Activated B cell treated with CpG ODN at 0.5 μM for 24 hours (primary cell): ENCODE measurements at regions of chr6 and their contacts with region 1.

Region 1: GRCh38 chr6:30672445-30673253 is at the start of gene DHX16:
- DNase-seq: peak; percentile 80
- ATAC-seq: peak; percentile 88
- H3K4me3 Mint-ChIP-seq: peak within 1 kb of the TSS; percentile 91
- H3K27ac Mint-ChIP-seq: peak within 1 kb of the TSS; percentile 84
- H3K4me1 Mint-ChIP-seq: peaks cover 42% of the 10 kb centered on the region
- H3K27me3 Mint-ChIP-seq: no peaks in the 10 kb centered on the region
- CTCF ChIP-seq: peak; percentile 51
- total RNA-seq, gene DHX16: 42.3 and 50.4 TPM in 2 replicates

Region 2: GRCh38 chr6:30556066-30556905 is 116.4 kb before region 1 on chr6 and contains the start of gene GNL1:
- CTCF ChIA-PET with region 1: no interaction called
- POLR2A ChIA-PET with region 1: interaction called, 3 read pairs
- intact Hi-C with region 1: loop called (anchors 1 kb)
- DNase-seq: peak; percentile 99
- ATAC-seq: peak; percentile 89
- H3K4me3 Mint-ChIP-seq: peak within 1 kb of the TSS; percentile 94
- H3K27ac Mint-ChIP-seq: peak within 1 kb of the TSS; percentile 97
- H3K4me1 Mint-ChIP-seq: peaks cover 40% of the 10 kb centered on the region
- H3K27me3 Mint-ChIP-seq: no peaks in the 10 kb centered on the region
- CTCF ChIP-seq: no peak
- total RNA-seq, gene GNL1: 67.2 and 67.4 TPM in 2 replicates

Region 3: GRCh38 chr6:30626484-30627366 is 45.9 kb before region 1 on chr6 and contains the start of gene ATAT1:
- CTCF ChIA-PET with region 1: interaction called, 4 read pairs
- POLR2A ChIA-PET with region 1: interaction called, 6 read pairs
- intact Hi-C with region 1: loop called (anchors 1 kb)
- DNase-seq: peak; percentile 86
- ATAC-seq: peak; percentile 99
- H3K4me3 Mint-ChIP-seq: peak within 1 kb of the TSS; percentile 90
- H3K27ac Mint-ChIP-seq: peak within 1 kb of the TSS; percentile 89
- H3K4me1 Mint-ChIP-seq: peaks cover 21% of the 10 kb centered on the region
- H3K27me3 Mint-ChIP-seq: no peaks in the 10 kb centered on the region
- CTCF ChIP-seq: no peak
- total RNA-seq, gene ATAT1: 6.9 and 10.3 TPM in 2 replicates

Region 4: DNA sequence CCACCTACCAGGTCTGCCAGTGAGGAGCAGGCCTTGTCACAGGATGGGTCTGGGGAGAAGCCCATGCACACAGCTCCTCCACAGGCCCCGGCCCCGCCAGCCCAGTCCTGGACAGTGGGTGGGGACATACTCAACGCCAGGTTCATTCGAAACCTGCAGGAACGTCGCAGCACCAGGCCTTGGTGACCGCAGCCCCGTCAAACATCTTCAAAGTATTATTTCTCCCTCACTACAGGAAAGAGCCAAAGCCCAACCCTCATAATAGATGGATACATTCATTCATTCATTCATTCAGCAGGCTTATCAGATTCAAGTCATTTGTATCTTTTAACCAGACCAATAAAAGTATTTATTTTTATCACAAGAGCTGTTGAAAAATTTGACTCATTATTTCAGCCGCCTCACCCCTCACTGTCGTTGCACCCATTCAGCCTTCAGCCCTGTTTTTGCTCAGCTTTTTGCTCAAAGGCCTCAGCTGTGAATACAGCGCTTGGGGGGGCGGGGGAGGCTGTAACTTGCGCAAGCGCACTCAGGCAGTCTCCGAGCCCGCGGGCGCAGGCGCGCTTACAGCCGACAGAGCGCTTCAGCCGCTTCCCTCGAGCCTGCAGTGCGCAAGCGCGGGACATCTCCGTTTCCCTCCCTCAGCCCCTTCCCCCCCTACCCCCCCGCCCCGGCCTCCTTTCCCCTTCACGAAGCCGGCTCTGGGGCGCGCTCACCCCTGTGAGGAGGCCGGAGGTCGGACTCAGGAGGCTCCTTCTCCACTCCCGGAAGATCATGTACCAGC is 26.0 kb before region 1 on chr6 and contains the start of gene C6orf136:
- CTCF ChIA-PET with region 1: no interaction called
- POLR2A ChIA-PET with region 1: no interaction called
- intact Hi-C with region 1: loop called (anchors 1 kb)
- DNase-seq: peak; percentile 82
- ATAC-seq: peak; percentile 78
- H3K4me3 Mint-ChIP-seq: peak within 1 kb of the TSS; percentile 91
- H3K27ac Mint-ChIP-seq: peak within 1 kb of the TSS; percentile 90
- H3K4me1 Mint-ChIP-seq: peaks cover 35% of the 10 kb centered on the region
- H3K27me3 Mint-ChIP-seq: no peaks in the 10 kb centered on the region
- CTCF ChIP-seq: no peak
- total RNA-seq, gene C6orf136: 21.6 and 35.6 TPM in 2 replicates

Region 5: DNA sequence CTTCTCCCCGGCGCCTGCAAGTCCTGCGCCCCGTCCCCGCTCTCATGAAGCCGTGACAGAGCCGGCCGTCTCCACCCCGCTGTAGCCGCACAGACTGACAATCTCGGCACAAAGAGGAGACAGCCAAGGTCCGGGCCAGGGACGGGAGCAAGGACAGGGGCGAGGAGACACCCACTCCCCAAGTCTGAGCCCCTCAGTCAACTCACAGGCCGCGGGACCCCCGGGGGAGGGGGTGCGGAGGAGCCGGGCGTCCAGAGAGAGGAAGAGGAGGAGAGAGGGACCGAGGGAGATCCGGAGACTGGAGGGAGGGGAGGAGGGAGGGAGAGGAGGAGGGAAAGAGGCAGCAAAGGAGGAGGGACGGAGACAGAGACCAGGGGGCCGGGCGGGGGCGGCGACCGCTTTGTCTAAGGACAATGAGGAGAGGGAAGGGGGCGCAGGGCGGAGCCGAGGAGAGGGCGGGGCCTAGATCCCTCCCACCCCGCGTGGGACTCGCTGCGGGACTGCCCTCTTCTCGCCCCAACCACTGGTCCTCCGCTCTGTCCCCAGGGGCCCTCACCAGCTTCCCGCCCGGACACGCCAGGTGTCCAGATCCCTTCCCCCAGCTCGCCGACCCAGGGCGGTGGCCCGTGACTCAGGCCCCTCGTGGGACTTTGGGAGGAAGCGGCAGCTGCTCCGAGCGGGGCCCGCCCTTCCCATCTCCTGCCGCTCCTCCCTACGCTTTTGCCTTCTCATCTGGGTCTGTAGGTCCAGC is 14.4 kb after region 1 on chr6:
- CTCF ChIA-PET with region 1: interaction called, 5 read pairs
- POLR2A ChIA-PET with region 1: interaction called, 11 read pairs
- intact Hi-C with region 1: loop called (anchors 1 kb)
- DNase-seq: peak; percentile 82
- ATAC-seq: peak; percentile 56
- H3K4me3 Mint-ChIP-seq: peak overlapping the region; percentile 92
- H3K27ac Mint-ChIP-seq: peak overlapping the region; percentile 99
- H3K4me1 Mint-ChIP-seq: peaks cover 78% of the 10 kb centered on the region
- H3K27me3 Mint-ChIP-seq: no peaks in the 10 kb centered on the region
- CTCF ChIP-seq: no peak